Activated CD8-positive, alpha-beta T cell treated with anti-CD3 and anti-CD28 coated beads for 36 hours (primary cell): ENCODE measurements at regions of chr5 and their contacts with region 1.

Region 1: GRCh38 chr5:172334196-172334595 is 50.6 kb upstream of the UBTD2 start:
- DNase-seq: peak; percentile 49
- ATAC-seq: peak; percentile 51
- H3K4me3 Mint-ChIP-seq: no peak overlapping the region
- H3K27ac Mint-ChIP-seq: no peak overlapping the region
- H3K4me1 Mint-ChIP-seq: no peaks in the 10 kb centered on the region
- H3K27me3 Mint-ChIP-seq: peaks cover 2% of the 10 kb centered on the region
- CTCF ChIP-seq: no peak

Region 2: DNA sequence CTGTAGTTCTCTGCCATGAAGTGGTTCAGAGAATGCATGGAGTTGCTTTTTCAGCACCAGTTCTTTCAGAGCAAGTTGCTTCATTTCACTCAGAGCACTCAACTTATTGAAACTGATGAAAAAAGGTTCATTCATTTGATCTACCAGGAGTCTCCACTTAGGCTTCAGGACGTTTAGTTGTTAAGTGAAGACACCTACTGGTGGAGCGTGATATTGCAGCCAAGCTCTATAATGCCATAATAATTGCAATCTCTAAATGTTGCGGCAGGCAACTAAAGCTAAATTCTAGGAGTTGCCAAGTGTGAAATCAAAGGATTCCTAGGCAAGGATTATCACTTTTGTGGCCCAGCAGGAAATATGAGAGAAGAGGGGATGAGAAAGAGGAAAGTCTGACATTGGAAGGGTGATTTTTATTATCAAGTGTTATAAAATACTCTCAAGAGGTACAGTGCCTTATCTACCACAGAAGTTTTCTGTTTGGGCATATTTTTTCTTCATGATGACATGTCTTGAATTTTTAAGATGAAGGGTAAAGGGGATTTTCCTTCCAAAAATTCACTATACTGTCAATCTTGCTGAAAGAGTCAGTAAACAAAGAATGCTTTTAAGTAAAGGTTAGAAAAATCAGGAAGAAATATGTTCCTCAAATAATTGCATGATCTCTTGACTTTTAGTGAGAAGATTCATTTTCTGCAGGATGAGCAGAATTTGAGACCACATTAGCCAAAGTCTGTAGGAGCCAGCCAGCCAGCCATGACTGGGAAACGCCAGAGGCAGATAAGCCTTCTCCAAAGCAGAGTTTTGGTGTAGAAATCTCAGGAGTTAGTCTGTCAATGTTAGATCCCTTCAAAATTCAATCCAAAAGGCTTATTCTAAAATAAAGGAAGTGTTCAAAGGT is 36.7 kb after region 1 on chr5:
- CTCF ChIA-PET with region 1: interaction called, 12 read pairs
- POLR2A ChIA-PET with region 1: no interaction called
- intact Hi-C with region 1: no loop called
- DNase-seq: peak; percentile 77
- ATAC-seq: peak; percentile 55
- H3K4me3 Mint-ChIP-seq: no peak overlapping the region
- H3K27ac Mint-ChIP-seq: no peak overlapping the region
- H3K4me1 Mint-ChIP-seq: no peaks in the 10 kb centered on the region
- H3K27me3 Mint-ChIP-seq: peaks cover 2% of the 10 kb centered on the region
- CTCF ChIP-seq: peak; percentile 81